Heart left ventricle (tissue), 16 donors: ENCODE measurements at regions of chr17 and their contacts with region 1.

Region 1: GRCh38 chr17:58020401-58020800 is 13.4 kb upstream of the SRSF1 start:
- DNase-seq: no peak
- ATAC-seq: no peak
- H3K4me3 ChIP-seq: no peak overlapping the region
- H3K27ac ChIP-seq: no peak overlapping the region
- H3K4me1 ChIP-seq: no peaks in the 10 kb centered on the region
- H3K27me3 ChIP-seq: peaks cover 0 to 15% (median 0%) of the 10 kb centered on the region in 9 donors
- CTCF ChIP-seq: no peak
- POLR2A ChIP-seq: no peak

Region 2: DNA sequence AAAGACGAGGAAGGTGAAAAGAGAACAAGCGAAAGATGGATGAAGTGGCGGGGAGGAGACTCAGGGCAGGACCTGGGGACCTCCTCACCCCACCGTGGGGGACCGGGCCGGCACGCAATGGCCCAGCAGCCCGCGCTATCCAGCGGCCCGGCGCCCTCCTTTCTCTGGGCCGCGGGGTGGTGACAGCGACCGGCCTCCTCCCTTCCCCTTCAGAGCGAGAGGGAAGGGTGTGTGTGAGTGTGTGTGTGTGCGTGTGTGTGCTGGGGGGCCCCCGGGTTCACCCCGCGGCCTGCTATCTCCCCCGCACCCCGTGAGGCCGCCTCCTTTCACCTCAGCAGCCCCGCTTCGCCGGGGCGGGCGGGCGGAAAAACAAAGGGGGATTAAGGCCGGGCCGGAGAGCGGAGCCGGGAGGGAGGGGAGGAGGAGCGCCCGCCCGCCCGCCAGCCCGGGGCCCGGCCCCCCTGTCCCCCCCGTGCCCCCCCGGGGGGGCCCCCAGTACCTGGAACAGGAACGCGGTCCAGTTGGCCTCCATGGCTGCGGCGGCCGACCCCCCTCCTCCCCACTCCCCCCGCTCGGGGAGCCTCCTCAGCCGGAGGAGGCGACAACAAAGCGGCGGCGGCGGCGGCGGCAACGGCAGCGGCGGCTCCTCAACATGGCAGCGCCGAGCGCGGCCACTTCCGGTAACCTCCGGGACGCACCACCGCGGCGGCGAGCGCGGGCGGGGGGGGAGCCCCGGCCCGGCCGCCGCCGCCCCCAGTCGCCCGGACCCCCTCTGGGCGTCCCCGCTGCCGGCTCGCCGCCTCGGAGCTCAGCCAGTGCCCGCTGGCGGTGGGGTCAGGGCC is 32.6 kb before region 1 on chr17 and contains the start of gene VEZF1:
- intact Hi-C with region 1: no loop called
- DNase-seq: peak; percentile 84 to 92 (median 89)
- ATAC-seq: peak; percentile 29 to 76 (median 73)
- H3K4me3 ChIP-seq: peak within 1 kb of the TSS; percentile 60 to 92 (median 86)
- H3K27ac ChIP-seq: peak within 1 kb of the TSS; percentile 91 to 99 (median 97)
- H3K4me1 ChIP-seq: peaks cover 0 to 78% (median 50%) of the 10 kb centered on the region in 12 donors
- H3K27me3 ChIP-seq: no peaks in the 10 kb centered on the region
- CTCF ChIP-seq: no peak
- POLR2A ChIP-seq: peak in 1 of 2 donors; percentile 27
- total RNA-seq, gene VEZF1: 58.9 to 85.6 (median 62.6) TPM

Region 3: DNA sequence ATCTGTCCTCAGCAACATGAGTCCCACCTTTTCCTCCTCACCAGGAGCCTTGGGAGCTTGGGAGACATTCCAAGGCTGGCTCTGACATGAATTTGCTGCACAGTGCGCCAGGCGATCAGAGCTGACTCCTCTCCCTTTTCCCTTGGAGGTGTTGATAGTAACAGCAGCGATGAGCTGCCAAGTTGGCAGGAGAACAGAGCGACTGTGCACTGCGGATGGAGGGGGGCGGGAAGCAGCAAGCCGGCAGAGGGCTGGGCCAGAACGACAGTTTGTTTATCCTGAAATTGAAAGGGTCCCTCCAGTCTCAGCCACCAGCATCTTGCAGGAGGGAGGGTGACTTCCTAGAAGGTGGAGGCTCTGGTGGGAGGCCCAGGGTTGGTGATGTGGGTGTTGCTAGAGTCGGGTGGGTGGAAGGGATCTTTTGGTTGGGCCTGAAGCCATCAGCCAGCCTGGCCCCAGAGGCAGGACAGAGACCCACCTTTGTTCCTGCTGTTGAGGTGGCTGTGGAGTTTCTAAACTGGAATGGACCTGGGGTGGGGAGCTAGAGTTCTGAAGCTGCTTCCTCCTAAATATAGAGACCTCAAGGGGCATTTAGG is 40.3 kb after region 1 on chr17:
- intact Hi-C with region 1: loop called in 1 of 10 experiments (anchors 5 kb)
- DNase-seq: peak; percentile 65 to 79 (median 71)
- ATAC-seq: peak; percentile 91 to 96 (median 94)
- H3K4me3 ChIP-seq: no peak overlapping the region
- H3K27ac ChIP-seq: peak overlapping the region in 2 of 12 donors; percentile 38 to 56
- H3K4me1 ChIP-seq: peaks cover 0 to 23% (median 9%) of the 10 kb centered on the region in 12 donors
- H3K27me3 ChIP-seq: no peaks in the 10 kb centered on the region
- CTCF ChIP-seq: no peak
- POLR2A ChIP-seq: no peak